ENCODE measurements at regions of chr11 and their contacts with region 1.

Region 1: GRCh38 chr11:67118801-67119584 is at the start of gene KDM2A:
- DNase-seq: peak; percentile 99 to 100
- ATAC-seq: peak; percentile 75 to 85
- H3K4me3 ChIP-seq: peak within 1 kb of the TSS; percentile 86
- H3K27ac ChIP-seq: peak within 1 kb of the TSS; percentile 99 to 100
- H3K4me1 ChIP-seq: peaks cover 39% of the 10 kb centered on the region
- CTCF ChIP-seq: peak; percentile 38
- EP300 ChIP-seq: no peak
- POLR2A ChIP-seq: peak; percentile 45
- RAD21 ChIP-seq: peak; percentile 7 to 59; a peak in 3 of 5 replicates
- polyA plus RNA-seq, gene KDM2A: 42.8 and 48.0 TPM in 2 replicates

Region 2: GRCh38 chr11:66920978-66921784 is 197.8 kb before region 1 on chr11:
- CTCF ChIA-PET with region 1: no interaction called
- POLR2A ChIA-PET with region 1: no interaction called
- DNase-seq: no peak
- ATAC-seq: no peak
- H3K4me3 ChIP-seq: no peak overlapping the region
- H3K27ac ChIP-seq: peak overlapping the region; percentile 10 to 72; a peak in 5 of 6 replicates
- H3K4me1 ChIP-seq: peaks cover 38% of the 10 kb centered on the region
- CTCF ChIP-seq: no peak
- EP300 ChIP-seq: no peak
- POLR2A ChIP-seq: no peak
- RAD21 ChIP-seq: no peak

Region 3: GRCh38 chr11:67167086-67167485 is 48.1 kb after region 1 on chr11:
- CTCF ChIA-PET with region 1: interaction called, 11 read pairs
- POLR2A ChIA-PET with region 1: interaction called, 3 read pairs
- DNase-seq: no peak
- ATAC-seq: no peak
- H3K4me3 ChIP-seq: no peak overlapping the region
- H3K27ac ChIP-seq: peak overlapping the region; percentile 47 to 66
- H3K4me1 ChIP-seq: peaks cover 32% of the 10 kb centered on the region
- CTCF ChIP-seq: no peak
- EP300 ChIP-seq: no peak
- POLR2A ChIP-seq: no peak
- RAD21 ChIP-seq: no peak

Measured in A549 (cell line).